ENCODE measurements at regions of chr1 and their contacts with region 1.

Region 1: DNA sequence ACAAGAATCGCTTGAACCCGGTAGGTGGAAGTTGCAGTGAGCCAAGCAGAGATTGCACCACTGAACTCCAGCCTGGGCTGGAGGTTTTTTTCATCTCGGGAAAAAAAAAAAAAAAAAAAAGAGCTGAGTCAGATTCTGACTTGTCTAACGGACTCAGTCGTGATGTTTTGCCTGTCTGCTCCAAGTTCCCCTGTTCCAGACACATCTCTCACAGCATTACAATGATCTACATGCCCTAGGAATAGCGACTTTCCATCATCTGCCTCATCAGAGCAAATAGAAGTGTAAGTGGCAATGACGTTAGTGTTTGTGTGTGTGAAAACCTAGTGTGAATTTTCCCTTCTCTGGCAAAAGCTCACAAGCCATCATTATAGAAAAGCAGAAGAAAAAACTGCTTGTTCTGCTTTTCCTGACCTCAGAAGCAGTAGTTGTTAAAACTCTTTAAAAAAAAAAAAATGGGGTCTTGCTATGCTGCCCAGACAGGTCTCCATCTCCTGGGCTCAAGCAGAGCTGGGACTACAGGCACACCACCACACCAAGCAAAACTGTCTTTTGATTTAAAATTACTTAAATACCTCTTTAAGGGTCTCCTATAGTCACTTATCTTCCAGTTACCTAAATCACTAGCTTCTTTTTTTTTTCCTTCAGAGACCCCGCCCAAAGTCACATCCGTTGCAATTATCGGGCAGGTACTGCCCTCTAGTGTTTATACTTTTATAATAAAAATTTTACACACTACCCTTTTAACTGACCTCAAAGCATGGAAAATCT is 37.3 kb downstream of the PLEKHO1 start:
- DNase-seq: peak; percentile 28
- ATAC-seq: peak; percentile 86
- H3K4me3 ChIP-seq: no peak overlapping the region
- H3K27ac ChIP-seq: no peak overlapping the region
- H3K4me1 ChIP-seq: peaks cover 5% of the 10 kb centered on the region; the same call in 1 of the 2 replicates
- H3K27me3 ChIP-seq: no peaks in the 10 kb centered on the region
- CTCF ChIP-seq: peak; percentile 77

Region 2: GRCh38 chr1:150010393-150011115 is 176.4 kb before region 1 on chr1 and contains the start of gene OTUD7B:
- CTCF ChIA-PET with region 1: interaction called, 11 read pairs
- POLR2A ChIA-PET with region 1: no interaction called
- in situ Hi-C with region 1: no loop called
- intact Hi-C with region 1: no loop called
- DNase-seq: peak; percentile 17
- ATAC-seq: peak; percentile 93
- H3K4me3 ChIP-seq: peak within 1 kb of the TSS; percentile 99
- H3K27ac ChIP-seq: peak within 1 kb of the TSS; percentile 97
- H3K4me1 ChIP-seq: peaks cover 28% of the 10 kb centered on the region
- H3K27me3 ChIP-seq: no peaks in the 10 kb centered on the region
- CTCF ChIP-seq: no peak
- total RNA-seq, gene OTUD7B: 24.1 TPM